ENCODE measurements at regions of chr7 and their contacts with region 1.

Region 1: DNA sequence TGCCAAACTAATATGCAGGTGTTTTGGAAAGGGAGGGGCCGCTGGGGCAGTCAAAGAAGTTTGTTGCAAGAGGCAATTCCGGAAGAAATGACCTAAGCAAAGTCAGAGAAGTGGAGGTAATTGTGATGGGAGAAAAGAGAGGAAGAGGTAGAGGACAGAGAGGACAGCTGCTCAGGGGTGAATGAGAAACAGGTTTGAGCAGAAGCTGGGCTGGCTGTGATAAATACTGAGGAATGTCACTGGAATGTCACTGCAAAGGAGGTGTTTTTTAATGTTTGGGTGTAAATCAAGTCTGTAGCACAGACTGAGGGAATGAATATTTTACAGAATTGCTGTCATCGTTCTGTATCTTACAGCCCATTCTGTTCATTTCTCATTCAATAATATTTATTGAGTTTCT is 207.2 kb downstream of the DPP6 start:
- DNase-seq: no peak
- H3K4me3 ChIP-seq: no peak overlapping the region
- H3K27ac ChIP-seq: no peak overlapping the region
- H3K4me1 ChIP-seq: no peaks in the 10 kb centered on the region
- H3K27me3 ChIP-seq: peaks cover 34% of the 10 kb centered on the region
- CTCF ChIP-seq: no peak

Region 2: GRCh38 chr7:154232700-154233099 is 26.7 kb before region 1 on chr7:
- CTCF ChIA-PET with region 1: no interaction called
- POLR2A ChIA-PET with region 1: no interaction called
- intact Hi-C with region 1: loop called (anchors 1 kb)
- DNase-seq: no peak
- H3K4me3 ChIP-seq: no peak overlapping the region
- H3K27ac ChIP-seq: no peak overlapping the region
- H3K4me1 ChIP-seq: no peaks in the 10 kb centered on the region
- H3K27me3 ChIP-seq: no peaks in the 10 kb centered on the region
- CTCF ChIP-seq: no peak

Region 3: DNA sequence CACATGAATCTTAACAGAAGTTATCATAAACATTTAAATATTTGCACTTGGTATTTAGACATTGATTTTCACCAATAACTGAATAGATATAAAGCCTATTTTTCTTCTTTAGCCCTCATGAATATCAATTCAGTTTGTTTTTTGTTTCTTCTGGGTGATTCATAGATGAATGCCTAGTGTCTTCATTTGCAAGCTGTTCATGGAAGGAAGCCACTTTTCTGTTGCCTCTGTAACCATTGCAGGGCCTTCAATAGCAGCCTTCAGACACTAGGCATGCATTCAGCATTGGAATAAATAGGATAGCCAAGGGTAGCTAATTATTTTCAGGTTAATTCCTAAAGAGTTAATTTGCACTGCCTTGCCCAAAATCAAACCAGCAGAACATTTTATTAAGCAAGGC is 168.1 kb after region 1 on chr7:
- CTCF ChIA-PET with region 1: no interaction called
- POLR2A ChIA-PET with region 1: no interaction called
- intact Hi-C with region 1: no loop called
- DNase-seq: no peak
- H3K4me3 ChIP-seq: no peak overlapping the region
- H3K27ac ChIP-seq: no peak overlapping the region
- H3K4me1 ChIP-seq: no peaks in the 10 kb centered on the region
- H3K27me3 ChIP-seq: peaks cover 49% of the 10 kb centered on the region
- CTCF ChIP-seq: no peak